HepG2 (cell line): ENCODE measurements at regions of chr15 and their contacts with region 1.

Region 1: GRCh38 chr15:52261498-52262242 is 33.9 kb downstream of the MYO5C start:
- DNase-seq: no peak
- ATAC-seq: no peak
- H3K4me3 ChIP-seq: no peak overlapping the region
- H3K27ac ChIP-seq: no peak overlapping the region
- H3K4me1 ChIP-seq: no peaks in the 10 kb centered on the region
- H3K27me3 ChIP-seq: no peaks in the 10 kb centered on the region
- CTCF ChIP-seq: no peak
- EP300 ChIP-seq: no peak
- POLR2A ChIP-seq: no peak
- RAD21 ChIP-seq: no peak

Region 2: DNA sequence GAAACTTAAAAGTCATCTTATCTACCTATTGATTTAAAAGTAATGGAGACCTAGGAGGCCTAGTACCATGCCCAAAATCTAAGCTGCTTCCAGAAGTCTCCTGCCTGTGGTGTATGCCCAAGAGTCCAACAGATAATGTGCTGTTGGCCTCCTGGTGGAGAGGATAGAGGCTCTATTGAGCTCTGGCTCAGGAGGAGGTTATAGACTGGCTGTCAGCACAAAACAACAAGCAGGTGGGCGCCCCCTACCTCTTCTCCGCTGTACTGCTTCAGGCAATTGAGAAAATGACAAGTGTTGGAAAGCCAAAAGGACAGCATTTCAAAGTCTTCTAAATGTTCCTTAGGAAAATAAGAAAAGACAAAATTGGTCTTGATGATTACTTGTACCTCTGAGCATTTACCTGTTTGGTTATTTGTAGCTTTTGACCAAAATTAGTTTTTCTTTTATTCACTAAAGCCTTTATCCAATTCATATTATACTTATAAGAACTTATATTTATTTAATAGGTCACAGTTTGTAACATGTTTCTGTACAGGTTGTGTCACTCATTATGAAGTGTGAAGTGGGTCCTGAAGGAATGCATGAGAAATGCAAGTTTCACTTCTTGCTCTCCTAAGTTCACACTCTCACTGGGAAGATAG is 53.2 kb before region 1 on chr15:
- CTCF ChIA-PET with region 1: no interaction called
- POLR2A ChIA-PET with region 1: no interaction called
- in situ Hi-C with region 1: no loop called
- intact Hi-C with region 1: no loop called
- DNase-seq: peak; percentile 76
- ATAC-seq: peak; percentile 99
- H3K4me3 ChIP-seq: no peak overlapping the region
- H3K27ac ChIP-seq: no peak overlapping the region
- H3K4me1 ChIP-seq: no peaks in the 10 kb centered on the region
- H3K27me3 ChIP-seq: no peaks in the 10 kb centered on the region
- CTCF ChIP-seq: peak; percentile 87
- EP300 ChIP-seq: no peak
- POLR2A ChIP-seq: no peak
- RAD21 ChIP-seq: peak; percentile 68

Region 3: DNA sequence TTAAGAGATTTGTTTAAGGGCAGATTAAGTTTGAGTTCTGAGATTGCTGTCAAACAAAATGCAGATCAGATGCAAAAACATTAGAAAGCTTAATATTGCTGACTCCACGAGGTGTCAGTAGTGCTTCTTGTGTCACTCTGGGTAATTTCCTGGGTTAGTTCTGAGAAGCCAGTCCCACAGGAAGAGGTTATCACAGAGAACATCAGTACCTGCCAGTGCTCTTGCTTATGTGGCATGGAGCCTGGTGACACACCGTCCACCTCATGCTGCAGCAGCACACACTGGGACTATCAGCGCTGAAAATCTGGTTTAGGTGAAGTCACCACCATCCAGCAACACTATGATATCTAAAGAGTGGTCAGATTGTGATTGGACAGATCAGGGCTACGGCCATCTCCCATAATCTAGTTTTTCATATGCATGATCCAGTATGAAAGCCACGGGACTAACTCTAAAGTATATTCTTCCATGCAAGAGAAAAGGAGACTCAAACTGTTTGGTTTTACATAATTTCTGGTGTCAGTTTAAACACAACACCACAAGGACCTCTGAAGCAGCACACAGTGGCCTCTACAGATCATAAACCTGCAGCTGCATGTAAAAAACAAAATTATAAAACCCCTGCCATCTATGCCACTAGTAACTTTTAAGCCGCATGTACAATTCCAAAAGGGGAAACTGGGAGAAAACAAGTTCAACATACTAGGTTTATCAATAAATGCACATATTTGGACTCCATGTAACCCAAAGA is 70.0 kb after region 1 on chr15:
- CTCF ChIA-PET with region 1: no interaction called
- POLR2A ChIA-PET with region 1: no interaction called
- in situ Hi-C with region 1: loop called (anchors 5 kb)
- intact Hi-C with region 1: loop called (anchors 2 kb)
- DNase-seq: peak; percentile 30
- ATAC-seq: peak; percentile 73
- H3K4me3 ChIP-seq: no peak overlapping the region
- H3K27ac ChIP-seq: no peak overlapping the region
- H3K4me1 ChIP-seq: peaks cover 19% of the 10 kb centered on the region
- H3K27me3 ChIP-seq: no peaks in the 10 kb centered on the region
- CTCF ChIP-seq: peak; percentile 66
- EP300 ChIP-seq: no peak
- POLR2A ChIP-seq: no peak
- RAD21 ChIP-seq: no peak